ENCODE measurements at regions of chr6 and their contacts with region 1.

Region 1: DNA sequence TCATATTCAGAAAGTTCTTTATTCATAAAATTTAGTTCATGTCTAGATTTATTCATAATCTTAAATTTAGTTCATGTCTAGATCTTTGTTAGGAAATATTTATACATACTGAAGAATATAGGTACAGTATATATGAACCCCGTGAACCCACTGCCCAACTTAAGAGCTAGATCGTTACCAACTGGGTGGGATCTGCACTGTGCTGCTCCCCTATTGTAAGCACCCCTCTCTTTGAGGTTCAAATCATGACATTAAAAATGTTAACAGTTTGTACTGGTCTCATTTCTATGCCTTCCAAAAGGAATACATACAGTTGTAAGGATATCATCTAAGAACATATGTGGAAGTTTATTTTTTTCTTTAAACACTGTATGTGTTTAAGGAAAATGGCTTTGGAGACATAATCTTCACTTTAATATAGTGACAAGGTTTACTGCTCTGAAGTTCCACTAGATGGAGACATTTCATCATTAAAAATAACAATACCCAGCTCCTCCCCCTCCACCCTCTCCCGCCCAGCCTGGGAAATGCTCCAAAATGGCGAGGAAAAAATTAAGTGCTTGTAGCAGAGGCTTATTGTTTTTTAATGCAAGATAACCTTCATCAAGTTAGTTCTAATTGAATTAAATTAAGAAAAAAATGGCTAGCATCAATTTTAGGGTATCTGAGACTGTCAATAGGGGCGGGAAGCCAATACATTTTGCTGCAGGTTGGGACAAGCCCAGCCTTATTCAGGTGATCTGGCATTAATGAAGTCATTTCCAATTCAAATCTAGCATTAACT is 104.1 kb upstream of the TRAF3IP2 start:
- DNase-seq: peak; percentile 67
- ATAC-seq: peak; percentile 79
- H3K4me3 Mint-ChIP-seq: no peak overlapping the region
- H3K27ac Mint-ChIP-seq: peak overlapping the region; percentile 92
- H3K4me1 Mint-ChIP-seq: peaks cover 63% of the 10 kb centered on the region
- H3K27me3 Mint-ChIP-seq: no peaks in the 10 kb centered on the region
- CTCF ChIP-seq: peak; percentile 73

Region 2: DNA sequence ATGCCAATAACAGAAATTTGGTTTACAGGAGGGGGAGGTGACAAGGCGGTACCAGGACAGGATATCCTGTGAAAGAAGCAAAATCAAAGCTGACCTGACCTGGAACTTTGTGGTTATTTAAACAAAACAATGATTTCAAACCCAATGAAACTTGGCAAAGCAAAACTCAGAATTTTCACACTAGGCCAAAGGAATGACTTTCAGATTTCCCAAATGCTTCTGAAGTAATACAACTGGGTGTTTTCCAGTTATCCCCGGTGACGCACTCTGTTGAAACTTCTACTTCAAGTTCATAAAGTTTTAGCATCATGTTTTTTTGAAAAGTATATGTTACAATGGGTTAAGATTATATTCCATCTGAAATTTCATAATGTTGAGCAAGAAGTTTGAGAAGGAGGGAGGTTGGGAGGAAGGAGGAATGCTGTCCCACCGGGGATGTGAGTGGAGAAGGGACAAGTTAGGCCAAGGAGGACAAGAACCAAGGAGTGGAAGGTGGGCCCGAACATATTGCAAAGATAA is 26.0 kb before region 1 on chr6:
- CTCF ChIA-PET with region 1: no interaction called
- POLR2A ChIA-PET with region 1: no interaction called
- intact Hi-C with region 1: no loop called
- DNase-seq: no peak
- ATAC-seq: no peak
- H3K4me3 Mint-ChIP-seq: no peak overlapping the region
- H3K27ac Mint-ChIP-seq: peak overlapping the region; percentile 74
- H3K4me1 Mint-ChIP-seq: peaks cover 82% of the 10 kb centered on the region
- H3K27me3 Mint-ChIP-seq: no peaks in the 10 kb centered on the region
- CTCF ChIP-seq: no peak

Region 3: DNA sequence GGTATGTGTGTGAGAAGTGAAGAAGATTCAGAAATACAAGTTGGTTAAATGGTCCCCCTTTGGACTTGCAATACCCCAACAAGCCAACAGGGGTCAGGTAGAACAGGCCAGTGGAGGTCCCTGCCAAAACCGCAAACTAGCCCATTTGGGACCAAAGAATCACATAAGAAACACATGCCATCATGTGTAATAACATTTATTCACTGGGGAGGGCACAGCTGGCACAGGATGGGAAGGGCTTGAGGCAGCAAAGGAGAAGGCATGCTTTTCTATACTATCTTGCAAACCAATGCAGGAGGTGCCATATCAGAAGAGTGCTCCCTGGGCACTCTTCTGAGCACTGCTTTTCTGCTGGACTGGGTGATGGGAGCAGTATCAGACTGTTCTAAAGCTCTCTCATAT is 11.9 kb after region 1 on chr6:
- CTCF ChIA-PET with region 1: interaction called, 18 read pairs
- POLR2A ChIA-PET with region 1: interaction called, 4 read pairs
- intact Hi-C with region 1: no loop called
- DNase-seq: peak; percentile 67
- ATAC-seq: peak; percentile 40
- H3K4me3 Mint-ChIP-seq: no peak overlapping the region
- H3K27ac Mint-ChIP-seq: peak overlapping the region; percentile 79
- H3K4me1 Mint-ChIP-seq: peaks cover 95% of the 10 kb centered on the region
- H3K27me3 Mint-ChIP-seq: no peaks in the 10 kb centered on the region
- CTCF ChIP-seq: peak; percentile 66

Region 4: DNA sequence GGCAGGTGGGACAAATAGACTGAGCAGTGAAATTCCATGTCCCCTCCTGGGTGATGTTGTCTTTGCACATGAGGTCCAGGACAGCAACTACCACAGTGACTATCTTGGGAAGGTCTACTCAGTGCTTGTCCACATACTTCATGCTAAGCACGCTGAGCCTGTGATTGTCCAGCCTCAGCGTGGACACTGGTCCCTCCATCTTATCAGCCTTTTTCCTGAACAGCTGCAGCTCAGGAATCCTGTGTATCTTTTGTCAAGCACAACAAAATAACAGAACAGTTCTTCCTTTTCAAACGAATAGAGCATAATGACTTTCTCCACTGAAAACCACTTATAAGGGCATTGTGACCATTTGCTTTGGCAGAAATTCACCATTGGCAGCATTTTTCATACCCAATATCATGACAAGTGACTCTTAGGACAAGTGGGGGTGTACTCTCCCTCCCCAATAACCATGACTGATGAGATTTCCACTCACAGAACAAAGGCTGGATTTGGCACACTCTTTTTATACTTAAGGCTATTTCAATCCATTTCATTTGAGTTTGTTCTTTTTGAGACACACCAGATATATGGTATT is 73.2 kb after region 1 on chr6:
- CTCF ChIA-PET with region 1: no interaction called
- POLR2A ChIA-PET with region 1: no interaction called
- intact Hi-C with region 1: no loop called
- DNase-seq: no peak
- ATAC-seq: no peak
- H3K4me3 Mint-ChIP-seq: no peak overlapping the region
- H3K27ac Mint-ChIP-seq: peak overlapping the region; percentile 74
- H3K4me1 Mint-ChIP-seq: peaks cover 82% of the 10 kb centered on the region
- H3K27me3 Mint-ChIP-seq: no peaks in the 10 kb centered on the region
- CTCF ChIP-seq: no peak

Region 5: GRCh38 chr6:111837641-111838500 is 128.1 kb after region 1 on chr6:
- CTCF ChIA-PET with region 1: interaction called, 11 read pairs
- POLR2A ChIA-PET with region 1: no interaction called
- intact Hi-C with region 1: no loop called
- DNase-seq: peak; percentile 81
- ATAC-seq: peak; percentile 77
- H3K4me3 Mint-ChIP-seq: peak overlapping the region; percentile 67
- H3K27ac Mint-ChIP-seq: no peak overlapping the region
- H3K4me1 Mint-ChIP-seq: peaks cover 73% of the 10 kb centered on the region
- H3K27me3 Mint-ChIP-seq: no peaks in the 10 kb centered on the region
- CTCF ChIP-seq: no peak

Region 6: GRCh38 chr6:111973118-111973761 is 263.4 kb after region 1 on chr6:
- CTCF ChIA-PET with region 1: interaction called, 10 read pairs
- POLR2A ChIA-PET with region 1: no interaction called
- intact Hi-C with region 1: no loop called
- DNase-seq: peak; percentile 75
- ATAC-seq: peak; percentile 85
- H3K4me3 Mint-ChIP-seq: peak overlapping the region; percentile 63
- H3K27ac Mint-ChIP-seq: peak overlapping the region; percentile 93
- H3K4me1 Mint-ChIP-seq: peaks cover 64% of the 10 kb centered on the region
- H3K27me3 Mint-ChIP-seq: no peaks in the 10 kb centered on the region
- CTCF ChIP-seq: no peak

Measured in activated CD8-positive, alpha-beta T cell treated with anti-CD3 and anti-CD28 coated beads for 36 hours (primary cell).